Heart right ventricle (tissue), 16 donors: ENCODE measurements at regions of chr9 and their contacts with region 1.

Region 1: DNA sequence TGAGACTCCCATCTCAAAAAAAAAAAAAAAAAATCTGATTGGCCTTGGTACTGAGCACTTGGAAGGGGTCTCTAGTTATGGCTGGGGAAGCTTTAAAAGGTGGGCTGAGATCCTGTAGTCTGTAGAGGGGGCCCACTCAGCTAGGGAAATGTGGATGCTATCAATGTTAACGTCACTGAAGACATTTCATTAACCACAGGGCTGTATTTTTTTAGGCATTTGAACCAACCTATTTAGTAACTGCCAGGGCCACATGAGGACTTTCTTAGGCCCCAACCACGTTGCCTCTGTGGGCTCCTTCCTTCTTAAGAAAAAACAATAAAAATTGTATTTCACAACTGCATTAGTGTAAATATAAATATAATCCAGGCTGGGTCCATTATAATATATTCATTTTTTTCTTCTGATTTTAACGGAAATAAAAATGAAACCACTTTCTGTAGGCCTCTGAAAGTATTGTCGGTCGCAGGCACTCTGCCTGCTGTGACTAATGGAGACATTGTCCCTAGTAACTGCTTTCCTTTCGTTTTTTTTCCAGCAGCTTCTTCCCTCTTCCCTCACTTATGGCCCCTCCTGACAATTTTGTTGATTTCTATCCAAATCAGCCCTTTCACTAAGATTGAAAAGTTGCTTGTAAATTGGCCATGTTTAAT is 71.6 kb downstream of the GCNT1 start:
- DNase-seq: no peak
- ATAC-seq: peak in 3 of 8 donors; percentile 49 to 63 (median 53)
- H3K4me3 ChIP-seq: no peak overlapping the region
- H3K27ac ChIP-seq: peak overlapping the region in 5 of 10 donors; percentile 0 to 66 (median 31)
- H3K4me1 ChIP-seq: peaks cover 0 to 34% (median 0%) of the 10 kb centered on the region in 9 donors
- H3K27me3 ChIP-seq: no peaks in the 10 kb centered on the region
- CTCF ChIP-seq: no peak

Region 2: GRCh38 chr9:76458903-76459690 is 71.5 kb before region 1 on chr9 and contains the start of gene GCNT1:
- intact Hi-C with region 1: loop called in 2 of 10 experiments (anchors 10 kb)
- DNase-seq: peak; percentile 76 to 88
- ATAC-seq: peak; percentile 93 to 98 (median 96)
- H3K4me3 ChIP-seq: peak within 1 kb of the TSS; percentile 26 to 89 (median 71)
- H3K27ac ChIP-seq: peak within 1 kb of the TSS in 9 of 10 donors; percentile 25 to 80 (median 62)
- H3K4me1 ChIP-seq: peaks cover 0 to 55% (median 11%) of the 10 kb centered on the region in 9 donors
- H3K27me3 ChIP-seq: peaks cover 0 to 6% (median 0%) of the 10 kb centered on the region in 7 donors
- CTCF ChIP-seq: peak in 8 of 9 donors; percentile 21 to 71 (median 47)
- total RNA-seq, gene GCNT1: 0.66 to 8.1 (median 2.3) TPM

Region 3: GRCh38 chr9:76610011-76610352 is 79.4 kb after region 1 on chr9:
- intact Hi-C with region 1: no loop called
- DNase-seq: peak; percentile 54 to 68
- ATAC-seq: peak; percentile 86 to 98 (median 94)
- H3K4me3 ChIP-seq: no peak overlapping the region
- H3K27ac ChIP-seq: peak overlapping the region in 1 of 10 donors; percentile 70
- H3K4me1 ChIP-seq: peaks cover 0 to 52% (median 0%) of the 10 kb centered on the region in 9 donors
- H3K27me3 ChIP-seq: peaks cover 0 to under 1% (median 0%) of the 10 kb centered on the region in 7 donors
- CTCF ChIP-seq: no peak

Region 4: GRCh38 chr9:77616191-77616590 is 1085.6 kb after region 1 on chr9:
- intact Hi-C with region 1: loop called in 1 of 10 experiments (anchors 10 kb)
- DNase-seq: no peak
- ATAC-seq: no peak
- H3K4me3 ChIP-seq: no peak overlapping the region
- H3K27ac ChIP-seq: no peak overlapping the region
- H3K4me1 ChIP-seq: no peaks in the 10 kb centered on the region
- H3K27me3 ChIP-seq: no peaks in the 10 kb centered on the region
- CTCF ChIP-seq: no peak